MCF 10A (cell line): ENCODE measurements at regions of chr9 and their contacts with region 1.

Region 1: GRCh38 chr9:103928442-103928841 is 165.7 kb upstream of the SMC2 start:
- DNase-seq: no peak
- H3K4me3 Mint-ChIP-seq: no peak overlapping the region
- H3K27ac Mint-ChIP-seq: no peak overlapping the region
- H3K4me1 Mint-ChIP-seq: no peaks in the 10 kb centered on the region
- H3K27me3 Mint-ChIP-seq: no peaks in the 10 kb centered on the region
- CTCF ChIP-seq: no peak

Region 2: DNA sequence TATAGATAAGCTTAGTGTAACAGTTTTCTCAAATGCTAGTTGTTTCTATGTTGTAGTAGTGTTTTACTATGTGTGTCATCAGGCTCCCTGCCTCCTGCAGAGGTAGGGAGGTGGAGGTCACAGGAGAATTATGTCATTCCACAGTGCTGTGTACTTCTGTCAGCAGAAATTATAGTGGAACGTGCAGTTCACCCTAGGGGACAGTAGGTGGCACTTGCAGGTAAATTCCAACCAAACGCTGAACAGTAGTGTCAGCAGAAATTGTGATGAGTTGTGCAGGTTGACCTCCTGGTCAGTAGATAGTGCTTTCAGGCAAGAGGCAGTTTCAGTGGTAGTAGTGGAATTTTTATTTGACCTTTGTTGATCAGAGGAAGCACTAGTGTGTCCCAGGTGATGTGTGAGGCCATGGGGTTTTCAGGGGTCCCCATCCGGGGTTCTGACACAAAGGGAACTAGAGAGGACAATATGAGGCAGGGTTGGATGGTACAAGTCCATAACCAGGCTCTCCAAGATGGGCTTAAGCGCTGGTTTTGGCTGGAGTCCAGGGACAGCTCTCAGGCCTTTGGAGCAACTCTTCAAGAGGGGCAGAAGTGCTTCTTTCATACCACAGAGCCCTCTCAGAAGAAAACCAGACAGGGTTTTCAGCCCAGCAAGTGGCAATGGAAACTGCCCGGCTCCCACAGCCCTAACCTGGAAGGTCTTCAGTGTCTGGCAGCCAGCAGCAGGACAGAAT is 530.4 kb before region 1 on chr9:
- CTCF ChIA-PET with region 1: interaction called, 3 read pairs
- POLR2A ChIA-PET with region 1: no interaction called
- intact Hi-C with region 1: loop called (anchors 1 kb)
- DNase-seq: peak; percentile 65
- H3K4me3 Mint-ChIP-seq: no peak overlapping the region
- H3K27ac Mint-ChIP-seq: no peak overlapping the region
- H3K4me1 Mint-ChIP-seq: peaks cover 6% of the 10 kb centered on the region
- H3K27me3 Mint-ChIP-seq: no peaks in the 10 kb centered on the region
- CTCF ChIP-seq: peak; percentile 76

Region 3: GRCh38 chr9:103872811-103873210 is 55.6 kb before region 1 on chr9:
- CTCF ChIA-PET with region 1: no interaction called
- POLR2A ChIA-PET with region 1: no interaction called
- intact Hi-C with region 1: no loop called
- DNase-seq: no peak
- H3K4me3 Mint-ChIP-seq: no peak overlapping the region
- H3K27ac Mint-ChIP-seq: no peak overlapping the region
- H3K4me1 Mint-ChIP-seq: no peaks in the 10 kb centered on the region
- H3K27me3 Mint-ChIP-seq: no peaks in the 10 kb centered on the region
- CTCF ChIP-seq: no peak

Region 4: DNA sequence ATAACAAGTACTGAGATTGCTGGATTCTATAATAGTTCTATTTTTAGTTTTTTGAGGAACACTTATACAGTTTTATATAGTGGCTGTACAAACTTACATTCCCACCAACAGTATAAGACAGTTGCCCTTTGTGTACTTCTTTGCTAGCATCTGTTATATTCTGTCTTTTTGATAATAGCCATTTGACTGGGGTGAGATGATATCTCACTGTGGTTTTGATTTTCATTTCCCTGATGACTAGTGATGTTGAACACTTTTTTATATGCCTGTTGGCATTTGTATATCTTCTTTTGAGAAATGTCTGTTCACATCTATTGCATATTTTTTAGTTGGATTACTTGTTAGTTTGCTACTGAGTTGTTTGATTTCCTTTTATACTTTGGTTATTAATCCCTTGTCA is 38.5 kb before region 1 on chr9:
- CTCF ChIA-PET with region 1: no interaction called
- POLR2A ChIA-PET with region 1: no interaction called
- intact Hi-C with region 1: loop called (anchors 1 kb)
- DNase-seq: no peak
- H3K4me3 Mint-ChIP-seq: no peak overlapping the region
- H3K27ac Mint-ChIP-seq: no peak overlapping the region
- H3K4me1 Mint-ChIP-seq: no peaks in the 10 kb centered on the region
- H3K27me3 Mint-ChIP-seq: no peaks in the 10 kb centered on the region
- CTCF ChIP-seq: no peak